ENCODE measurements at regions of chr16 and their contacts with region 1.

Region 1: DNA sequence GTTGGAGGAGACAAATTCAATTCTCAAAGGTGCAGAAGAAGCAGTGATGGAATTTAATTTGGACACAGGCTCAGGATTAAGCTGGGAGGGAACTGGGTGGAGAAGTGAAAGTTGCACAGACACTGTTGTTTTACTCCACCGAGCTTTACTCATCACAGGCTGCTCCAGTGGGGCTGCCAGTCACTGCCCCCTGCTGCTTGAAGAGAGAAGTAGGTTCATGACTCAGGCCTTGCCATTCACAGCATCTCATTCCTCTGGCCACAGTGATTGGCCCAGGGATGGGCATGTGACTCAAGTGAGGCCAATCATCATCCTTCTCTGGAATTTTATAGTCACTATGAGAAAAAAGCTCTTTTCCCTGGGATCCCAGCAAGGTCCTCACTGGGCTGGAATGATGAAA is 11.8 kb downstream of the GNAO1 start:
- DNase-seq: peak; percentile 55 to 70 (median 66)
- H3K4me3 ChIP-seq: no peak overlapping the region
- H3K4me3 Mint-ChIP-seq: no peak overlapping the region
- H3K27ac ChIP-seq: no peak overlapping the region
- H3K27ac Mint-ChIP-seq: no peak overlapping the region
- H3K4me1 ChIP-seq: peaks cover 57% of the 10 kb centered on the region
- H3K4me1 Mint-ChIP-seq: peaks cover 0 to 24% (median 9%) of the 10 kb centered on the region in 4 donors
- H3K27me3 ChIP-seq: no peaks in the 10 kb centered on the region
- H3K27me3 Mint-ChIP-seq: no peaks in the 10 kb centered on the region

Region 2: DNA sequence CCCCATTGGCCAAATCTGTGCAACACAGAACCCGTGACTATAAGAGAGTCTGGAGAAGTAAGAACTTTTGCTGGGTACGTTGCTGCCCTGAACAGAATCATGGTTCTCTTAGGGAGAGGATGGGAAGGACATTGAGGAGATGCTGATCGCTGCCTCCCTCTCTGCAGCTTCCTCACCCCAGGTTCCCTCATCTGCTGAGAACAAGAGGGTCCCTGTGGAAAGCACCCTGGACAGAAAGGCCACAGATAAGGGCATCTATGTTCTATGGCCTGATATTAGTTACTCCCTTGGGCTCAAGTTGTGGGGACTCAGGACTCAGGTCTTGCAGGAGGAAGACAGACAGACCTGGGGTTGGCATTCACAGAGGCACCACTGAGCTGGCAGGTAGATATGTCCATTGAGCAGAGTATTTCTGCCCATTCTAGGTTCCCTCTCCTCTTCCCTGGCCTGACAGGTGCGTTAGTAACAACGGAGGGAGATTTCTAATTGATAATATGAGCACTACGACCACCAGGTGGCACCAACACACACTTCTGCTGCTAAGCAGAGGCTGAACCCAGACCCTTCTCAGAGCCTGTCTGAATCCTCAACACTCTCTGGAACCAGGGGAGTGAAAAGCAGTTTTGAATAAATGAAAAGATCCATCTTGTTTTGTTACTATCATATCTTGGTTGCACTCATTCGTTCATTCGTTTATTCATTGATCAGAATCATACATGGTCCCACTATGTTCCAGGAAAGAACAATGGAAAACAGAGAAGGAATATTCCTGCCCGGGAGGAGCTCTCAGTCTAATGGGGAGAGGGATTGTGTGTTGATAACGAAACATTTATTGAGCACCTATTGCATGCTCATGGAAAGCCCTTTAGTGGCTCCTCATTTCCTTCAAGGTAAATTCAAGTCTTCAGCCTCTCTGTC is 490.8 kb before region 1 on chr16:
- CTCF ChIA-PET with region 1: interaction called, 4 read pairs
- POLR2A ChIA-PET with region 1: no interaction called
- intact Hi-C with region 1: loop called (anchors 1 kb)
- DNase-seq: peak in 4 of 5 donors; percentile 27 to 52 (median 45)
- H3K4me3 ChIP-seq: no peak overlapping the region
- H3K4me3 Mint-ChIP-seq: no peak overlapping the region
- H3K27ac ChIP-seq: no peak overlapping the region
- H3K27ac Mint-ChIP-seq: no peak overlapping the region
- H3K4me1 ChIP-seq: no peaks in the 10 kb centered on the region
- H3K4me1 Mint-ChIP-seq: peaks cover 0 to 2% (median under 1%) of the 10 kb centered on the region in 4 donors
- H3K27me3 ChIP-seq: peaks cover 4% of the 10 kb centered on the region
- H3K27me3 Mint-ChIP-seq: peaks cover 6 to 27% of the 10 kb centered on the region in 2 donors

Region 3: DNA sequence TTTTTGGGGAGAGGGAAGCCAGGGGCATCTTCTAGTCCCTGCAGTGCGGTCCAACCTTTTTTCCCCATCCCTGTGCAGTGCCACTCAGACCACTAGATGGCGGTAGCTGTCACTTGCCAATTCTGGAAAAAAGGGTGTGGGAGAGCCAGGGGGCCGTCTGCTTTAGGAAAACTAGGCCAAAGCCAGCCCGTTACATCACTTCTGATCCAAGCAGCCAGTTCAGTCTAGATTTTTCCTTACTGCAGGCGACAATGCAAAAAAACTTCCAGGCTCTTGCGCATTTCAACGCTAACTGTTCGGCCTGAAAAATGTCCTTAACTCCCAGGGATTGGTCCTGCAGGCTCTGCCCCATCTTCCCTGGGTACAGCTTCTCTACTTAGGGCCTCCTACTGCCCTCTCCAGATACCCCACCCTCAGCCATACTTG is 258.7 kb before region 1 on chr16:
- CTCF ChIA-PET with region 1: interaction called, 98 read pairs
- POLR2A ChIA-PET with region 1: interaction called, 6 read pairs
- intact Hi-C with region 1: loop called (anchors 1 kb)
- DNase-seq: peak; percentile 40 to 48 (median 44)
- H3K4me3 ChIP-seq: no peak overlapping the region
- H3K4me3 Mint-ChIP-seq: no peak overlapping the region
- H3K27ac ChIP-seq: no peak overlapping the region
- H3K27ac Mint-ChIP-seq: no peak overlapping the region
- H3K4me1 ChIP-seq: no peaks in the 10 kb centered on the region
- H3K4me1 Mint-ChIP-seq: peaks cover 0 to 2% (median 0%) of the 10 kb centered on the region in 4 donors
- H3K27me3 ChIP-seq: no peaks in the 10 kb centered on the region
- H3K27me3 Mint-ChIP-seq: peaks cover 39 to 40% of the 10 kb centered on the region in 2 donors

Region 4: DNA sequence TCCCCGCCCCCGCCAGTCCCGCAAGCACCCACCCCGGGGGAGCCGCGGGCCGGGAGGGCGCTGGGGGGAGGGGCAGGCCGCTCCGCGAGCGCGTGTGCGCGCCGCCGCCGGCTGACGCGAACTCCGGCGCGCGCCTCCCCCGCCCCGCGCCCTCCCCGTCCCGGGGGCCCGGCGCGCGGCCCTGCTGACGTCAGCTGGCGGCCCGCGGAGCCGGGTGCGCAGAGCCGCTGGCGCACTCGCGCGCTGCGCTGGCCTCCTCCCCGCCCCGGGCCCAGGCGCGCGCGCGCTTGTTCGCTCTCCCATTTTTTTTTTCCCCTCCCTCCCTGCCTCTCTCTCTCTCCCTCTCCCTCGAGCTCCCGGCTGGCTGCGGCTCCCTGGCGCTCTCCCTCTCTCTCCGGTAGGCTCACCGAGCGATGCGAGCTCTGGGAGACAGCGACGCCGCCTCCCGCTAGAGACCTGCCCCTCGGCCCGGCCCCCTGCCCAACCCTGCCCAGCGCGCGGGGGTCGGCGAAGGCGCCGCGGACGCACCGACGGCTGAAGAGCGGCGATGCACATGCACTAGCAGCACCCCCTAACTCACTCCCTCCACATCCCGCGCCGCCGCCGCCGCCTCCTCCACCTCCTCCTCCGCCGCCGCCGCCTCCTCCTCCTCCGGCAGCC is 11.8 kb before region 1 on chr16 and contains the start of gene GNAO1:
- CTCF ChIA-PET with region 1: interaction called, 38 read pairs
- POLR2A ChIA-PET with region 1: interaction called, 71 read pairs
- intact Hi-C with region 1: loop called (anchors 1 kb)
- DNase-seq: peak; percentile 62 to 79 (median 76)
- H3K4me3 ChIP-seq: peak within 1 kb of the TSS; percentile 6 to 56
- H3K4me3 Mint-ChIP-seq: peak within 1 kb of the TSS; percentile 84 to 90 (median 85)
- H3K27ac ChIP-seq: peak within 1 kb of the TSS; percentile 56
- H3K27ac Mint-ChIP-seq: peak within 1 kb of the TSS; percentile 68 to 87 (median 81)
- H3K4me1 ChIP-seq: peaks cover 42% of the 10 kb centered on the region
- H3K4me1 Mint-ChIP-seq: peaks cover 18 to 50% (median 33%) of the 10 kb centered on the region in 4 donors
- H3K27me3 ChIP-seq: no peaks in the 10 kb centered on the region
- H3K27me3 Mint-ChIP-seq: peaks cover 3 to 12% of the 10 kb centered on the region in 2 donors
- total RNA-seq, gene GNAO1: 10.5 to 10.8 TPM

Region 5: GRCh38 chr16:56262148-56262547 is 59.1 kb after region 1 on chr16:
- CTCF ChIA-PET with region 1: interaction called, 50 read pairs
- POLR2A ChIA-PET with region 1: interaction called, 33 read pairs
- intact Hi-C with region 1: loop called (anchors 5 kb)
- DNase-seq: peak; percentile 74 to 88 (median 84)
- H3K4me3 ChIP-seq: peak overlapping the region; percentile 2 to 45
- H3K4me3 Mint-ChIP-seq: peak overlapping the region; percentile 47 to 82 (median 65)
- H3K27ac ChIP-seq: peak overlapping the region; percentile 45
- H3K27ac Mint-ChIP-seq: peak overlapping the region; percentile 77 to 97 (median 89)
- H3K4me1 ChIP-seq: peaks cover 59% of the 10 kb centered on the region
- H3K4me1 Mint-ChIP-seq: peaks cover 36 to 75% (median 52%) of the 10 kb centered on the region in 4 donors
- H3K27me3 ChIP-seq: no peaks in the 10 kb centered on the region
- H3K27me3 Mint-ChIP-seq: no peaks in the 10 kb centered on the region

Region 6: GRCh38 chr16:56401482-56401881 is 198.4 kb after region 1 on chr16:
- CTCF ChIA-PET with region 1: no interaction called
- POLR2A ChIA-PET with region 1: no interaction called
- intact Hi-C with region 1: no loop called
- DNase-seq: no peak
- H3K4me3 ChIP-seq: no peak overlapping the region
- H3K4me3 Mint-ChIP-seq: no peak overlapping the region
- H3K27ac ChIP-seq: no peak overlapping the region
- H3K27ac Mint-ChIP-seq: peak overlapping the region in 1 of 7 donors; percentile 43
- H3K4me1 ChIP-seq: no peaks in the 10 kb centered on the region
- H3K4me1 Mint-ChIP-seq: peaks cover 0 to 5% (median under 1%) of the 10 kb centered on the region in 4 donors
- H3K27me3 ChIP-seq: no peaks in the 10 kb centered on the region
- H3K27me3 Mint-ChIP-seq: no peaks in the 10 kb centered on the region

Region 7: GRCh38 chr16:56519459-56520250 is 316.6 kb after region 1 on chr16 and contains the start of gene BBS2:
- CTCF ChIA-PET with region 1: no interaction called
- POLR2A ChIA-PET with region 1: no interaction called
- intact Hi-C with region 1: no loop called
- DNase-seq: peak; percentile 88 to 92 (median 91)
- H3K4me3 ChIP-seq: peak within 1 kb of the TSS; percentile 63 to 93
- H3K4me3 Mint-ChIP-seq: peak within 1 kb of the TSS; percentile 86 to 90 (median 88)
- H3K27ac ChIP-seq: peak within 1 kb of the TSS; percentile 73
- H3K27ac Mint-ChIP-seq: peak within 1 kb of the TSS; percentile 82 to 93 (median 92)
- H3K4me1 ChIP-seq: peaks cover 37% of the 10 kb centered on the region
- H3K4me1 Mint-ChIP-seq: peaks cover 37 to 59% (median 44%) of the 10 kb centered on the region in 4 donors
- H3K27me3 ChIP-seq: no peaks in the 10 kb centered on the region
- H3K27me3 Mint-ChIP-seq: no peaks in the 10 kb centered on the region
- total RNA-seq, gene BBS2: 95.8 to 96.0 TPM